ENCODE measurements at regions of chr12 and their contacts with region 1.

Region 1: DNA sequence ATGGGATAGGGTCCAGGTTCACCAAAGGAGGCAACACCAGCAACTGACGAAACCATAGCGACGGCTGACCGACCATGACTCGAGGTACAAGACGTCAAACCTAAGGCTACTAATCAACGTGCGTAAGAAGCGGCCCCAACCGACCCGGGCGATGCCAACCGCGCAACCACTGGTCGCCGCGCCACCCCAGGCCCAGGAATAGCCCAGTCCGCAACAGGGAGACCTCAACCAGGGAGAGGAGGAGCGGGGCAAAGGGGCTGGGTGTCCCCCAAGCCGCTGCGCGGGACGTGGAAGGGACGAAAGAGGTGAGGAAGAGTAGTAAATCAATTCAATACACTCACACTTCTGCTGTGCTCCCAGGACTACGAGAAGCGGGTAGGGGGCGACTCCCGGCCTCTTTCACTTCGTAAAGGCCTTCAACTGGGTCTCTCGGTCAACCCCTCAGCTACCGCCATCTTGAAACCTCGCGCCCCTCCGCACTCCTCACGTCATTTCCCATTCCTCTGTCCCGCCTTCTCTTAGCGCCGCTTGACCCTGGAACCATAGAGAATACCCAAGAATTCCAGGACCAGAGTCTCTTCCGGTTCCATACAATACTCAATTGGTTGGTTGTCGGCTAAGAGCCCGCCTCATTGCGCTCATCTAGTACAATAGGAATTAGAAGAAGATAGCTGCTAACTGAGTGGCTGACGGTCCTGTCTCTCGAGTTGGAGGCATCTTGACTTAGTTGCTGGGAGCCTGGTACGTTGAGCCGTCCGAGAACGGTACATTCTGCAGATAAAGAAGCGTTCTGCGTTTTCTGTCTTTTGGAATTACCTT is at the starts of genes C12orf60 and WBP11:
- DNase-seq: peak; percentile 88 to 99 (median 90)

Region 2: GRCh38 chr12:14741942-14742341 is 61.3 kb before region 1 on chr12:
- intact Hi-C with region 1: no loop called
- DNase-seq: no peak

Region 3: GRCh38 chr12:14774066-14774905 is 28.9 kb before region 1 on chr12:
- intact Hi-C with region 1: loop called (anchors 2 kb)
- DNase-seq: peak; percentile 85 to 99 (median 94)

Measured in posterior cingulate gyrus (tissue), 11 donors.